ENCODE measurements at regions of chr16 and their contacts with region 1.

Region 1: DNA sequence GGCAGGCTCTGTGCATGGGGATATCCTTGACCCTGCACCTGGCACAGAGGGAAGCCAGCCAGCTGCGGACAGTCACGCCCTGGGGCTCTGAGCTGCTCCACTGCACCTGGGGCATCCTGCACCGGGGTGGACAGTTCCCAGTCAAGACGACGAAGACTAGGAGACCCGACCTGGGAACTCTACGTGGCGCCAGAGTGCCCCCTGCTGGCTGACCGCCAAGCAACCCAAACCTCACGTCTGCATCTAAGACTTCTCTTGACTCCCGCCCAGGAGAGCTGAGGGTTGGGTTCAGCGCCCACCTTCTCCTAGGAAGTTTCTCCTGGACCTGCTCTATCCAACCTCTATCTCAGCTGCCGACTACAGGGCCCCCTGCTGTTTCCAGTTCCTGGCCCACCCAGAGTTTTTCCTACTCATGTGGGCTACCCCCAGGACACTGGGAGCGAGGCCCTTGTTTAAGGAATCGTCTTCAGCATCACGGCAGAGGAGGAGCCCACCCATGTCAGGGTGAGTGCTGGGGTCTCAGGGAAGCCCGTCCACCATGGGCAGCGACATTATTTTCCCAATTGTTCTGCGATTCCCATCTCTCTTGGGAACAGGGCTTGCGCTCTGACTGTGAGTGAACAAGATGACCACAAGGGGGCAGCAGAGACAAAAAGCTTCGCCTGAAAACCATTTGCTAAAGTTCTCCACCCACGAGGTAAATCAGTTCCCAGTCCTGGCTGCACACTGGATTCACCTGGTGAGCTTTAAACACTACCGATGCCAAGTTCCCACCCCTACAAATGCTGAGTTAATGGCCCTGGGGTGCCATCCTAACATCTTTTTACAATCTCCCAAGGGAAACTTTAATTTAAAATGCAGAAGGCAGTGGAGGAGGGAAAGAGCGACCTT is 29.3 kb downstream of the TLE7 start:
- DNase-seq: peak; percentile 46 to 78 (median 64)
- ATAC-seq: peak; percentile 96
- H3K4me3 ChIP-seq: no peak overlapping the region
- H3K27ac ChIP-seq: no peak overlapping the region
- H3K4me1 ChIP-seq: peaks cover 0 to 5% of the 10 kb centered on the region in 2 donors
- H3K27me3 ChIP-seq: peaks cover 0 to 64% of the 10 kb centered on the region in 2 donors
- CTCF ChIP-seq: peak; percentile 85 to 90

Region 2: DNA sequence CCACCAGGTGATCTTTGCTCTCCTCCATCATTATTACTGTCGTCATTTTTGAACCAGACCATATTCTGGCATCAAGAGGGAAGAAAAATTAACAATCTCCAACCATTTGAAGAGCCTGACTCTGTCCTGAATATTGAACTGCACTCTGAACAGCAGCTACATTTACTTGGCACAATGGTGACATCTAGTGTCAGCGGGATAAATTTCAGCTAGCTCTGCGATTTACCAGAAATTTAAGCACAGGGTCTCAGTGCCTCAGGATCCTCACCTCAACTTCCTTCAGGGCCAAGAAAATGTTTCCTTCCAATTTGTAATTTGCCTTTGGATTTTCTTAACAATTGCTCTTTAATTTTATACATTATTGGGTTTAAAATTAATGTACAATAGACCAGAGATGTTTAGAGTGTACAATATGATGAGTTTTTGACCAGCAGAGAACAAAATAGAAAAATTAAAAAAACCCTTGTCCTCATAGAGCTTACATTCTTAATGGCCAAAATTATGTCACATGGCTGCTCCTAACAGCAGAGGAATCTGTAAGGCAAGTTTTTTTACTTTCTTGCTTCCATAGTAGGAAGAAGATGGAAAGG is 87.4 kb after region 1 on chr16:
- intact Hi-C with region 1: loop called in 1 of 2 experiments (anchors 5 kb)
- DNase-seq: peak in 2 of 4 donors; percentile 36 to 58
- ATAC-seq: peak; percentile 82
- H3K4me3 ChIP-seq: no peak overlapping the region
- H3K27ac ChIP-seq: no peak overlapping the region
- H3K4me1 ChIP-seq: no peaks in the 10 kb centered on the region
- H3K27me3 ChIP-seq: no peaks in the 10 kb centered on the region
- CTCF ChIP-seq: peak; percentile 49 to 57

Region 3: DNA sequence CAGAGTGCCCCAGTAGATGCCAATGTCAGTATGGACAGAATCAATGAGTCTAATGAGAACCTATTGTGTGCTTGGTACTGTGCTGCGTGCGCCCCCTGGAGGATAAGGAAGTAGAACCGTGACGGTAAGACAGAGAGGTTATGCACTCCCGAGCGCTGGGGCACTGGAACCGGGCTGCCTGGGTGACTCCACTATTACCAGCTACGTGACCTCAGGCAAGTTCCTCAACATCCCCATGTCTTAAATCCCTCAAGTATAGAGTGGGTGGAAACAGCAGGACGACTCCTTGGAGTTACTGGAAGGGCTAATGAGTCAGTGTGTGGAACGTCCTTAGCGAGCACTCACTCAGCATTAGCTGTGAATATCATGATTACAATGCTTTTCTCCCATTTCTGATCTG is 129.9 kb after region 1 on chr16:
- intact Hi-C with region 1: no loop called
- DNase-seq: peak in 1 of 4 donors; percentile 38
- ATAC-seq: peak; percentile 70
- H3K4me3 ChIP-seq: no peak overlapping the region
- H3K27ac ChIP-seq: no peak overlapping the region
- H3K4me1 ChIP-seq: no peaks in the 10 kb centered on the region
- H3K27me3 ChIP-seq: no peaks in the 10 kb centered on the region
- CTCF ChIP-seq: peak; percentile 27 to 49

Region 4: DNA sequence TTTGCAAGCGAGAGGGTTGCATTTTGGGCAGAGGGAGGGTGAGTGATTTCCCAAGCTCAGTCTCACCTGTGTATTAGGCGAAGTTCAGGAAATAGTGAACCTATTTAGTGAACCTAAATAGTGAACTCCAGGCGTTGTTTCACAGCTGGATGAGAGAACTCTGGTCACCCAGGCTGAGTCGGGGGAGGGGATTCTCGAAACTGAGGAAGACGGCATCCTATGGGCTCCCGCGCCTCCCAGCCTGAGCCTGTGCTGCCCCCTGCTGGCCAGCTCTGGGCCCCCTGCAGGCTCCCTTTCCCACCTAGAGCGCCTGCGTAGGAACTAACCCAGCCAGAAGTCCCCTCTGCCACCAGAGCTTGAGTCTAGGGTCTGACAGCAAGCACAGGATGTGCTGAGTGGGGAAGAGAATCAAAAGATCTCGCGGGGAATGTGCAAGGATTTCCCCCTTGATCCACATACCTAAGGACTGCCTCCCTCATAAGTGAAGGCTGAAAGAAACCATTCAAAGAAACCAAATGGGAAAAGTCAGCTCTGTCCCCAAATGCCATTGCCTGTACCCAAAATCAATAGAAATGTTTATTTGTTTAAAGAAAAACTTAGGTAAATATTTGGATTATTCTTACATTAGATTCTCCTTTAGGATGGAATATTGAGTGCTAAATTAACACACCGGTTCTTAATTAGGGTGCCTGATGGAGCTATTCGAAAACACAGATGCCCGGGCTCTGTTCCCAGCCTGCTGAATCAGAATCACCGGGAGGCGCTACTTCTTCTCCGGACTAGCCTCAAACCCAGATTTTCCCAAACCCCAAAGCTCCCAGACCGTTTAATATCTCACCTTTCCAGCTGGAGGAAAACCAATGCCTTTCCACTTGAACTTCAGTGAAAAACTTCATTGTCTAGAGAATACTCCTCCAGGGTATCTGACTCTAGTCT is 198.7 kb after region 1 on chr16:
- intact Hi-C with region 1: loop called in 1 of 2 experiments (anchors 10 kb)
- DNase-seq: peak; percentile 34 to 92 (median 66)
- ATAC-seq: peak; percentile 99
- H3K4me3 ChIP-seq: no peak overlapping the region
- H3K27ac ChIP-seq: no peak overlapping the region
- H3K4me1 ChIP-seq: no peaks in the 10 kb centered on the region
- H3K27me3 ChIP-seq: peaks cover 0 to 22% of the 10 kb centered on the region in 2 donors
- CTCF ChIP-seq: peak; percentile 89 to 93